ENCODE measurements at regions of chr2 and their contacts with region 1.

Region 1: GRCh38 chr2:210606001-210606400 is 49.6 kb downstream of the CPS1 start:
- DNase-seq: no peak
- H3K4me3 ChIP-seq: no peak overlapping the region
- H3K27ac ChIP-seq: no peak overlapping the region
- H3K4me1 ChIP-seq: no peaks in the 10 kb centered on the region
- H3K27me3 ChIP-seq: no peaks in the 10 kb centered on the region

Region 2: GRCh38 chr2:210617732-210618330 is 11.8 kb after region 1 on chr2:
- CTCF ChIA-PET with region 1: interaction called, 23 read pairs
- POLR2A ChIA-PET with region 1: no interaction called
- DNase-seq: peak; percentile 7 to 44 (median 37)
- H3K4me3 ChIP-seq: no peak overlapping the region
- H3K27ac ChIP-seq: no peak overlapping the region
- H3K4me1 ChIP-seq: no peaks in the 10 kb centered on the region
- H3K27me3 ChIP-seq: no peaks in the 10 kb centered on the region